ENCODE measurements at regions of chr16 and their contacts with region 1.

Region 1: GRCh38 chr16:89873972-89874689 is 739 bp downstream of the TCF25 start:
- DNase-seq: peak; percentile 89
- ATAC-seq: peak; percentile 75
- H3K4me3 ChIP-seq: peak overlapping the region; percentile 79
- H3K27ac ChIP-seq: peak overlapping the region; percentile 98
- H3K4me1 ChIP-seq: peaks cover 17% of the 10 kb centered on the region
- H3K27me3 ChIP-seq: no peaks in the 10 kb centered on the region
- CTCF ChIP-seq: no peak

Region 2: GRCh38 chr16:89749647-89750046 is 124.5 kb before region 1 on chr16:
- CTCF ChIA-PET with region 1: no interaction called
- POLR2A ChIA-PET with region 1: no interaction called
- intact Hi-C with region 1: no loop called
- DNase-seq: no peak
- ATAC-seq: no peak
- H3K4me3 ChIP-seq: no peak overlapping the region
- H3K27ac ChIP-seq: no peak overlapping the region
- H3K4me1 ChIP-seq: no peaks in the 10 kb centered on the region
- H3K27me3 ChIP-seq: no peaks in the 10 kb centered on the region
- CTCF ChIP-seq: no peak

Region 3: GRCh38 chr16:89785523-89786155 is 88.5 kb before region 1 on chr16:
- CTCF ChIA-PET with region 1: no interaction called
- POLR2A ChIA-PET with region 1: interaction called, 24 read pairs
- intact Hi-C with region 1: no loop called
- DNase-seq: no peak
- ATAC-seq: no peak
- H3K4me3 ChIP-seq: no peak overlapping the region
- H3K27ac ChIP-seq: no peak overlapping the region
- H3K4me1 ChIP-seq: no peaks in the 10 kb centered on the region
- H3K27me3 ChIP-seq: no peaks in the 10 kb centered on the region
- CTCF ChIP-seq: no peak

Region 4: DNA sequence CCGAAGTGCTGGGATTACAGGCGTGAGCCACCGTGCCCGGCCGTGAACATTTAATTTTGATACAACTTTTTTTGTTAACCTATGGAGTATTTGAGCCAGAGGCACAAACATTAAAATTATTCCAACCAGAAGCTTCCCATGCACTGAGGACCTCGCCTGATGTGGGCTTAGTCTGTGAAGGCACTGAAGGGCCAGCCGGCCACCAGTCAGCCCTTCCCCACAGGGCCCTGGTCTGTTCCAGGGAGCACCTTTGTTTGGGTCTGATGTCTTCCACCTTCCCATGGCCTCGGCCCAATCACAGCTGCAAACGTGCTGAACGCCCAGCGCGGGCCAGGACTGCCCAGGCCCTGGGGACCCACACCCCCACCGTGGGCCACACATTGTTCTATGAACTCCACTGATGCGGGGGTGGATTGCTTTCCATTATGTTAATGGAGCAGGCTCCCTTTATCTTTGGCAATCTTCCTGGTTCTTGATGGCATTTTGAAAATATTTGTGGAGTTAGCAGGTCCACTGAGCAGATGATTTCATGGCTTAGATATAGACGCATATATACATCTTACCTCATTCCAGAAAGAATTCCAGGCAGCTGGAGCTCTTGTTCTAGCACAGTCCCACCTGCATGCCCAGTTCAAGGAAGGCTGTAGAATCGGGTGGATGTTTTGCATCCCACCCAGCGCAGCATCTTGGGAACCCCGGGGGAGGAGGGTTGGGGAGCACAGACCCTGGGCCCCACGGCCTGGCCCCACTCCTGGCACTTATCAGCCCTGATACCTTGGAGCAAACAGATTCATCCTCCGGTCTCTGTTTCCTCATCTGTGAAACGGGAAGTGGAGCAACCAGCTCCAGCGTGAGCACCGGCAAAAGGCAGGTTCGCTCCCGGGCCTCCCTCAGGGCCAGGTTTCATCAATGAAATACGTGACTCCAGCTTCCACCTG is 31.4 kb before region 1 on chr16:
- CTCF ChIA-PET with region 1: no interaction called
- POLR2A ChIA-PET with region 1: no interaction called
- intact Hi-C with region 1: no loop called
- DNase-seq: peak; percentile 63
- ATAC-seq: peak; percentile 64
- H3K4me3 ChIP-seq: no peak overlapping the region
- H3K27ac ChIP-seq: no peak overlapping the region
- H3K4me1 ChIP-seq: peaks cover 23% of the 10 kb centered on the region
- H3K27me3 ChIP-seq: no peaks in the 10 kb centered on the region
- CTCF ChIP-seq: no peak

Region 5: GRCh38 chr16:89958068-89958467 is 83.9 kb after region 1 on chr16:
- CTCF ChIA-PET with region 1: no interaction called
- POLR2A ChIA-PET with region 1: no interaction called
- intact Hi-C with region 1: no loop called
- DNase-seq: peak; percentile 33
- ATAC-seq: peak; percentile 71; the same call in 1 of the 2 replicates
- H3K4me3 ChIP-seq: no peak overlapping the region
- H3K27ac ChIP-seq: no peak overlapping the region
- H3K4me1 ChIP-seq: no peaks in the 10 kb centered on the region
- H3K27me3 ChIP-seq: no peaks in the 10 kb centered on the region
- CTCF ChIP-seq: no peak